Activated naive CD4-positive, alpha-beta T cell treated with anti-CD3 and anti-CD28 coated beads for 36 hours (primary cell): ENCODE measurements at regions of chr9 and their contacts with region 1.

Region 1: DNA sequence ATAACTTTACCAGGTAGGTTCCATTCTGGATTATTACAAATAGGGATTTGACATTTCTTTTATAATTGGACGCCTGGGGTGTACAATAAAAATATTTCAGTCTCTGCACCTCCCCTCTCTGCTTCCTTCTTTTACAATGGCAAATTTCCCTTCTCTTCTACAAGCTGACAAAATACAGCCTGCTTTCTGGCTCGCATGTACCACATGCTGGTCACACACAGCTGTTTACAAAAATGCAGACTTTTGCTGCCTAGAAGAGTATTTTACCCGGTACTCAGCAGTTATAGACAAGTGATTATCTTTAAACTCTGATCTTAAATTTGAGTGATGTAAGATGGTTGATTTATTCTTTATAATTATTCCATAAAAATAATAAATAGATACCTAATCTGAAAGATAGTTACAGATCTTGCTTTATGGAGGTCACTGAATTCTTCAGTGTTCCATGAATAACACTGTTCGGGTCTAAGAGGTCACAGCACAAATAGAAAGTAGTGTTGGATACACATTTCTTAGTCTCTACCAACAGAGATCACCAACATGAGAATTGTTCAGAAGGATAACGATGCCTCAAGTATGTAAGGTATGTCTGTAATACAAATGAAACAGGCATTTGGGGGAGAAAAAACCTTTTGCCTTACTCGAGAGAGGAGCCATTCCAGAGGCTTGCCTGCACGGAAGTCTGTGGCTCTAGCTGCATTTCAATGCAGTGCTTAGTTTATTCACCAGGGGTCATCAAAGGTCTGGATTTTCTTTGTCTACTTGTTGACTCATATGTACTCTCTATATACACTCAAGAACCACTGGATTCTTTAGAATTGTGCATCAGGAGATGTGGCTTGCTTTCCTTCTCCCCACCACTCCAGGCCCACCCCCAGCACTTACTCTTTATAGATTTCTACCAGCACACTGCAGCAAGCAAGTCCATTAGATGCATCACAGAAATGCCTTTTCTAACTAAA is 206.6 kb upstream of the RFX3 start:
- DNase-seq: peak; percentile 55
- H3K4me3 Mint-ChIP-seq: no peak overlapping the region
- H3K27ac Mint-ChIP-seq: no peak overlapping the region
- H3K4me1 Mint-ChIP-seq: peaks cover 18% of the 10 kb centered on the region
- H3K27me3 Mint-ChIP-seq: peaks cover 2% of the 10 kb centered on the region

Region 2: DNA sequence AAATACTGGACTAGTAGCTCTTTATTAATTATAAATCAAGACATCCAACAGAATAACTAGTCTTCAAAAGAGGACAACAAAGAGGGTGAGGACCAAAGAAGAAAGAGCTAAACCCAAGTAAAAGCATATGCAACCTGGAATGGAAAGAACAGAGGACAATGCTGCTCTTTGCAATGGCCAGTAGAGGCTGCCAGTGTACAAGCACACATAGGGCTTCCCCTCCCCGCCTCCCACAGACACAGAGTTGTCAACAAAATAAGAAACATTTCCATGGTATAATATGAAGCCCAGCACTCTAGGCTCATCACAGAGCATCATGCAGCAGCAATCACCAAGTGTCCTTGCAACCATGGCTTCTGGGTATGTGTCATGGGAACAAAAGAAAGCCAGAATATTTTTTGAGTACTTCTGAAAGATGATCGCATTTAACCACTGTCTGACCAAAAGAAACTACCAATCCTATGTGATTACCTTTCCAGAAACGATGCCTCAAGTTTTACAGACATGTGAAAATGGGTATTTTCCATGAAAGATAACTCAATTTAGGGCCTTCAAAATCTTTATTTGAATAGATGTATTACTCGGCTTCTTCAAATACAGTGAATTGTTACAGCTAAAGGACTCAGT is 264.7 kb before region 1 on chr9:
- CTCF ChIA-PET with region 1: no interaction called
- intact Hi-C with region 1: loop called (anchors 2 kb)
- DNase-seq: peak; percentile 75
- H3K4me3 Mint-ChIP-seq: no peak overlapping the region
- H3K27ac Mint-ChIP-seq: no peak overlapping the region
- H3K4me1 Mint-ChIP-seq: peaks cover 12% of the 10 kb centered on the region
- H3K27me3 Mint-ChIP-seq: no peaks in the 10 kb centered on the region

Region 3: GRCh38 chr9:3868012-3868411 is 135.7 kb after region 1 on chr9:
- CTCF ChIA-PET with region 1: no interaction called
- intact Hi-C with region 1: loop called (anchors 5 kb)
- DNase-seq: peak; percentile 35
- H3K4me3 Mint-ChIP-seq: no peak overlapping the region
- H3K27ac Mint-ChIP-seq: no peak overlapping the region
- H3K4me1 Mint-ChIP-seq: peaks cover 8% of the 10 kb centered on the region
- H3K27me3 Mint-ChIP-seq: peaks cover 9% of the 10 kb centered on the region

Region 4: DNA sequence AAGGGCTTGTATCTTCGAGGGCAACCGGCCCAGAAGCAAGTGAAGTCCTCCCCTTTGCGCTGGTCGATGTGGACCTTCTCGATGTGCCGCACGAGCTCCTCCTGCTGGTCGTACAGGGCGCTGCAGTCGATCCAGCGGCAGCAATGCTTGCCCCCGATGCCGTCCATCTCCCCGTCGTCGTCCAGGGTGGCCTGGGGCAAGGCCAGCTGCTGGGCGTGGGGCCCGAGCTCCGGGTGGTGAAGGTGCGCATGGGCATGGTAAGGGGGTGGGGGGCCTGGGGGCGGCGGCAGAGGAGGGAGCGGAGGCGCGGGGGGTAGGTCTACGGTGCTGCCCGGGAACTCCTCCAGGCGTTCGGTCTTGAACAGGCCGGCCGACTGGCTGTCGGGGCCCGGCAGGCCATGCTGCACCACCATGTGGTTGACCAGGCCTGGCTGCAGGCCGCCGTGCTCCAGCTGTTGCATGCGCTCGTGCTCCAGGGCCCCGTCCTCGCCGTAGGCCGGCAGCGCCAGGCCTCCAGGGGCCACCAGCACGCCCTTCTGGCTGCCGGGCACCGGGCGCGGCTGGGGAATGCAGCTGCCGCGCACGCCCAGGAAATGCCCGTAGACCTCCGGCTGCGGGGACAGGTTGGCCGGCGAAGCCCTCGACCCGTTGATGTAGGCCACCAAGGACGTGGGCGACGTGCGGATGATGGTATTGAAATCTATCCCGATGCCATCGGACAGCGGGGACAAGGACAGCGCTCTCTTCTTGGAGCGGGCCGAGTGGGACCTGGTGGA is 385.7 kb after region 1 on chr9:
- CTCF ChIA-PET with region 1: interaction called, 5 read pairs
- intact Hi-C with region 1: loop called (anchors 1 kb)
- DNase-seq: peak; percentile 62
- H3K4me3 Mint-ChIP-seq: no peak overlapping the region
- H3K27ac Mint-ChIP-seq: no peak overlapping the region
- H3K4me1 Mint-ChIP-seq: no peaks in the 10 kb centered on the region
- H3K27me3 Mint-ChIP-seq: no peaks in the 10 kb centered on the region

Region 5: GRCh38 chr9:4297151-4297785 is 564.9 kb after region 1 on chr9:
- CTCF ChIA-PET with region 1: no interaction called
- intact Hi-C with region 1: loop called (anchors 5 kb)
- DNase-seq: peak; percentile 80
- H3K4me3 Mint-ChIP-seq: peak overlapping the region; percentile 86
- H3K27ac Mint-ChIP-seq: peak overlapping the region; percentile 86
- H3K4me1 Mint-ChIP-seq: peaks cover 42% of the 10 kb centered on the region
- H3K27me3 Mint-ChIP-seq: peaks cover 7% of the 10 kb centered on the region

Region 6: GRCh38 chr9:4366591-4367330 is 634.4 kb after region 1 on chr9:
- CTCF ChIA-PET with region 1: interaction called, 8 read pairs
- intact Hi-C with region 1: loop called (anchors 1 kb)
- DNase-seq: peak; percentile 60
- H3K4me3 Mint-ChIP-seq: no peak overlapping the region
- H3K27ac Mint-ChIP-seq: no peak overlapping the region
- H3K4me1 Mint-ChIP-seq: peaks cover 3% of the 10 kb centered on the region
- H3K27me3 Mint-ChIP-seq: no peaks in the 10 kb centered on the region